ENCODE measurements at regions of chrX and their contacts with region 1.

Region 1: DNA sequence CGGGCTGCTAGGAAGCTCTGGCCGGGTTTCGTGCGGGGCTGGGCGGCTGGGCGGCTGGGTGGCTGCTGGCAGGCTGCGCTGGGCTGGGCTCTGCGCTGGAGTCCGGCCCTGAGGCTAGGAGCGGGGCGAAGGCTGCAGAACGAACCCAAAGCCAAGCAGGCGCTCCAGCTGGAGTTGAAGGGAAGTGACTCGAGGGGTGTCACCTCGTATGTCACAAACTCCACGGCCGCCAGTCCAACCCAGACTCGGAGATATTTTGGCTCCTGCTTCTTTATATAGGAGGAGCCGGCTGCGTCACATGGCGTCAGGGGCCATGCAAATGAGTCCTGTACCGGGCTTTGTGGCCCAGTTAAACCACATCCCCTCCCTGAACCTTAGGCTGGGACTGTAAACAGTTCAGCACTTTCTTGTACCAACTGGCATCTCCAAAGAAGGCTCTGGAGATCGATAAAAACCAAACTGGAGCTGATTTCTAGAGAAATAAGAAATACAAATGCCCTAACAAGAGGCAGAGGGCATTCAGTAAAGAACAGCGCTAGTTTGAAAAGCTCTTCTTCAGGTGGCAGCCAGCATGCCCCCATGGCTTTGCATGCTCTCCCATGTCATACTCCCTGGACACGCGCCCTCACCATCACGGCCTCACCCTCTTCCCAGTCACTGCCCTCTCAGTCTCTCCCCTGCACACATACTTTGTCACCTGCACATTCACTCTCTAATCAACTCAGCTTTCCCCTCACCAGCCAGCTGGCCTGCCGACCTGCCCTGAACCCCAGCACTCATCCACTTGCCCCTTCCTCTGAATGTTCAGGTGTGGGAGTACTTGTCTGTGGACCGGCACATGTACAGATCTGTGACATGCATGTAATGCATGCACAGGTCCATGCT is 58.5 kb downstream of the TSC22D3 start:
- DNase-seq: peak; percentile 77
- H3K4me3 ChIP-seq: peak overlapping the region; percentile 47 to 68 (median 65)
- H3K27ac ChIP-seq: peak overlapping the region; percentile 85
- H3K4me1 ChIP-seq: peaks cover 13% of the 10 kb centered on the region
- H3K27me3 ChIP-seq: no peaks in the 10 kb centered on the region
- CTCF ChIP-seq: no peak

Region 2: DNA sequence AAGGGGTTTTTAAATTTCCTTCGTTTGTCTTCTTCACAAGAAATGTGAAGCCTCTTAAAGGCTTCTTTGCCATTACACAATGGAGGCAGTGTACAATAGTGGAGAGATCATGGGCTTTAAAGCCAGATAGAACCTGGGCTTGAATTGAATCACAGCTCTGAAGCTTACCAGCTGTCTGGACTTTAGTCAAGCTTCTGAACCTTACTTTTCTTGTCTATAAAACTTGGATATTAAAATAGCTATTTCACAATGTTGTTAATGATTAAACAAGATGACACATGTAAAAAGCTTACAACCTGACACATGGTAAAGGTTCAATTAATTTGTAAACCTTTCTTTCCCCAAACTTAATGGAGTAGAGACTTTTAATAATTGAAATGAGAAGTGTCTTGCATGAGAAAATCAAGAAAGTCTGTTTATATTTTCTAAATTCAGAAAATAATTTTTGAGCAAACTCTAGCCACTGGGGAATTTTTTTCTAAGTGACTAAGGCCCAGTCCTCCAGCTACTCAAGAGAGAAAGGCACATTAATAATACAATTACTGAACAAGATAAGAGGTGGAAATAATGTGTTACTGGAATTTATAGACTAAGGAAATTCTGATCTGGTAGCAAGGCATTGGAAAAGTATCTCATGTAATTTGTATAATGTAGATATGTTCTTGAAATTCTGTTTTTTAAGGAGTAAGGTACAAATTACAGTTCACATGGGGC is 936.2 kb before region 1 on chrX:
- CTCF ChIA-PET with region 1: no interaction called
- dilution Hi-C with region 1: no loop called
- in situ Hi-C with region 1: no loop called
- intact Hi-C with region 1: no loop called
- DNase-seq: no peak
- H3K4me3 ChIP-seq: no peak overlapping the region
- H3K27ac ChIP-seq: no peak overlapping the region
- H3K4me1 ChIP-seq: no peaks in the 10 kb centered on the region
- H3K27me3 ChIP-seq: no peaks in the 10 kb centered on the region
- CTCF ChIP-seq: no peak

Region 3: GRCh38 chrX:107589243-107589642 is 127.8 kb before region 1 on chrX:
- CTCF ChIA-PET with region 1: no interaction called
- dilution Hi-C with region 1: no loop called
- in situ Hi-C with region 1: no loop called
- intact Hi-C with region 1: no loop called
- DNase-seq: no peak
- H3K4me3 ChIP-seq: no peak overlapping the region
- H3K27ac ChIP-seq: no peak overlapping the region
- H3K4me1 ChIP-seq: no peaks in the 10 kb centered on the region
- H3K27me3 ChIP-seq: no peaks in the 10 kb centered on the region
- CTCF ChIP-seq: no peak

Region 4: DNA sequence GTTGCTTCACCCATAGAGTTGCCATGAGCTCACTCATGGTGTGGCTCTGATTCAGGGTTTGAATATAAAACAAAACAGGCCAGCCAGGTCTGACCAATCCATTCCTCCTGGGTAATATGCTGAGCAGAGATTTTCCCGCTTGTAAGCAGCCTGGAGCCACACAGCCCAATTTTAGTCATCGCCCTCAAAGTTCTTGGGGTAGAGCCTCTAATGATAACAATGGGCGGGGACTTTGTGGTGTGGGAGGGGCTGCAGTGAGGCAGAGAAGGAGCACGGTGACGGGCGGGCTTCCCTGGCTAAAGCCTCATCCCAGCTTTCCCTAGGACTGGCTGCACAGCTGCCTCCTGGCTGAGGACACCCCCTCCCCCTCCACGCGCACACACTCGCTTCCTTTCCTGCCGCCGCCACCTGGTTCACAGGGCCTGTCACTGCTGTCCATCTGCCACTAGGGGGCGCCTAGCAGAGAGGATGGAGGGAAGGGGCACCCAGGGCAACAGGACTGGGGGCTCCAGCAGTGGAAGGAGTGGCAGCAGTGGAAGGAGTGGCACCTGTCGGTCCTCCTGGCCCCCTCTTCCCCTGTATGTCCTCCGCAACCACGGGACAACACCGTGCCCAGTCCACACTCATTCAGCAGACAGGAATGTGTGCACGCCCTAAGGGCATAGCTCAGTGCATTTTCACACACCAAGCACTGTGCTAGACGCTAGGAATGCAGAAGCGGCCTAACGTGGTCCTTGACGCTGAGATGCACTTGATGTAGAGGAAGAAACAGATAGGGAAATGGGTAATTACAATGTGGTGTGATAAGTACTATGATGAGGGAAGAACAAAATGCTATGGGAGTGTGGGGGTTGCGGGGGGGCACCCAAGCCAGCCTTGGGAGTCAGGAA is 61.9 kb before region 1 on chrX:
- CTCF ChIA-PET with region 1: interaction called, 3 read pairs
- dilution Hi-C with region 1: no loop called
- in situ Hi-C with region 1: no loop called
- intact Hi-C with region 1: loop called (anchors 1 kb)
- DNase-seq: peak; percentile 91
- H3K4me3 ChIP-seq: no peak overlapping the region
- H3K27ac ChIP-seq: no peak overlapping the region
- H3K4me1 ChIP-seq: peaks cover 6% of the 10 kb centered on the region
- H3K27me3 ChIP-seq: no peaks in the 10 kb centered on the region
- CTCF ChIP-seq: peak; percentile 48 to 62

Region 5: GRCh38 chrX:107747596-107748161 is 30.6 kb after region 1 on chrX:
- CTCF ChIA-PET with region 1: no interaction called
- dilution Hi-C with region 1: no loop called
- in situ Hi-C with region 1: no loop called
- intact Hi-C with region 1: loop called (anchors 2 kb)
- DNase-seq: peak; percentile 73
- H3K4me3 ChIP-seq: no peak overlapping the region
- H3K27ac ChIP-seq: peak overlapping the region; percentile 70
- H3K4me1 ChIP-seq: peaks cover 23% of the 10 kb centered on the region
- H3K27me3 ChIP-seq: no peaks in the 10 kb centered on the region
- CTCF ChIP-seq: no peak

Region 6: DNA sequence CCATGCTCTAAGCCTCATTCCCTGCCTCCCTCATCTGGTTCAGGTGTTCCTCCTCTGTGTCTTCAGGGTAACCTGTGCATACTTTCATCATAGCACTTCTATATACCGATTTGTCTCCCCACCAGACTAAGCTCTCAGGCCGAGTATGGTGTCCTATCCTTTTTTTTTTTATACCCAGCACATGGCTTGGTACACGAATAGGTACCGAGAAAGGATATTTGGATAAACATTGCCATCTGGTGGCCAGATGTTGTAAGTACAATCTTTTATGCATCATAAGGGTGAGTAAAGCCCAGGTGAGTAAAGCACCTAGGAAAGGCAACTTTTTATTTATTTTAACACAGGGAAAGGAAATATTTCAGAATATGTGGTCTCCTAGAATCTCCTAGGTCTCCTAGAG is 177.0 kb after region 1 on chrX:
- CTCF ChIA-PET with region 1: no interaction called
- dilution Hi-C with region 1: no loop called
- in situ Hi-C with region 1: no loop called
- intact Hi-C with region 1: loop called (anchors 2 kb)
- DNase-seq: peak; percentile 57
- H3K4me3 ChIP-seq: no peak overlapping the region
- H3K27ac ChIP-seq: no peak overlapping the region
- H3K4me1 ChIP-seq: no peaks in the 10 kb centered on the region
- H3K27me3 ChIP-seq: no peaks in the 10 kb centered on the region
- CTCF ChIP-seq: peak; percentile 46 to 53